ENCODE measurements at regions of chr12 and their contacts with region 1.

Region 1: GRCh38 chr12:80186727-80187217 is 87.4 kb downstream of the OTOGL start:
- DNase-seq: peak in 29 of 42 donors; percentile 6 to 74 (median 42)

Region 2: DNA sequence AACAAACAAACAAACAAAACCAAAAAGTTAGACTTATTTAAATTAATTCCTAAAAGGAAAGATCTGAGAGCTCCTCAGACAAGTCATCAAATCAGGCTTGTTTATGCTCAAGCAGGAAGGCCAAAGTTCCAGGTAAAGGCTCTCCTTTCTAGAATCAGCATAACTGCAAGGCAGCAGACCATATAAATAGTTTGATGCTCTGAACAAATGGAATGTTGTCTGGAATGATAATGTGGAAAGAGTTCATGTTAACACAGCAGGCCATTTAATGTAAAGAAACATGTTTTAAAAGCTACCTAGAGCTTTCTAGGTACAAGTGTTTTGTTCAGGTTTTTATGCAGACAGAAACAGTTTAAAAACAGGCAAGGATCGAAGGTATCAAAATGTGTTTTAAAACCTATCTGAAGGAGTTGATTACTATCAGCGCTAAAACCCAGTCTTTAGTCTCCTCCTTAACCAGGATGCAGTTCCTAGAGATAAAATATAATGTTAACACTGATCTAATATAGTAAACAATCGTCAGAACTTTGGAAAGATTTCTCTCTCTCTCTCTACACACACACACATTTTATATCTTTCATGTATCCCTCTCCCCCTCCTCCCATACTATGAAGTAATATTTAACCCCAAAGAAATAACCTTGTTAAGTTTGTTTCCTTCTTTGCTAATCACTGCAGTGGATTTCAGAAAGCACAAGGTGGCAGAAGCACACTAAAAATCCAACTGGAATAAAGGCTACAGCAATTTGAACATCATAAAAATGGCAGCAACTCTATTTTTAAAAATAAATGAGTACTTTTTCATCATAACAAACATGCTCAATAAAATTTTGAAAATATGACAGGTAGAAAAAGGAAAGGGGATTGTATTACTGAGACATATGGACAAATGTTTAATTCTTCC is 631.5 kb before region 1 on chr12:
- intact Hi-C with region 1: loop called (anchors 10 kb)
- DNase-seq: peak in 3 of 42 donors; percentile 13 to 29 (median 27)